Common myeloid progenitor, CD34-positive (primary cell): ENCODE measurements at regions of chr4 and their contacts with region 1.

Region 1: DNA sequence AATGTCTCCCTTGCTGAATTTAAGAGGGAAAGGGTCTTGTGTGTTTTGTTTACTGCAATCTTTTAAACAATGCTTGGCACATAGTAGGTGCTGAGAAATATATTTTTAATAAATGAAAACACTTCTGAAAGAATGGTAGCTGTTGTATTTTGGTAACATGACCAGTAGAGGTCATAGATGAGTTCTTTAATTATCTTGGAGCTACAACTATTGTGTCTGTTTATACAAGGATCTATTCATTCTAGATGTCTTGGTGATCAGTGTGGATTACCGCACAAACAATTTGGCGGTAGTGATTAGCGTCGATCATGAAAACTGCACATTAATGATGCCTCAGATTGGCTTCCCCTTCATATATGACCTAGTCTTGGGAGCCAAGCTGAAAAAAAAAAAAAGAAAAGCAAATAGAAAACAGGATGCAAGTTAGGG is 21.4 kb upstream of the SCRG1 start:
- DNase-seq: peak in 2 of 3 donors; percentile 42 to 51
- H3K4me3 ChIP-seq: no peak overlapping the region
- H3K27ac ChIP-seq: no peak overlapping the region
- H3K4me1 ChIP-seq: peaks cover 0 to 40% (median 6%) of the 10 kb centered on the region in 4 experiments
- H3K27me3 ChIP-seq: no peaks in the 10 kb centered on the region

Region 2: DNA sequence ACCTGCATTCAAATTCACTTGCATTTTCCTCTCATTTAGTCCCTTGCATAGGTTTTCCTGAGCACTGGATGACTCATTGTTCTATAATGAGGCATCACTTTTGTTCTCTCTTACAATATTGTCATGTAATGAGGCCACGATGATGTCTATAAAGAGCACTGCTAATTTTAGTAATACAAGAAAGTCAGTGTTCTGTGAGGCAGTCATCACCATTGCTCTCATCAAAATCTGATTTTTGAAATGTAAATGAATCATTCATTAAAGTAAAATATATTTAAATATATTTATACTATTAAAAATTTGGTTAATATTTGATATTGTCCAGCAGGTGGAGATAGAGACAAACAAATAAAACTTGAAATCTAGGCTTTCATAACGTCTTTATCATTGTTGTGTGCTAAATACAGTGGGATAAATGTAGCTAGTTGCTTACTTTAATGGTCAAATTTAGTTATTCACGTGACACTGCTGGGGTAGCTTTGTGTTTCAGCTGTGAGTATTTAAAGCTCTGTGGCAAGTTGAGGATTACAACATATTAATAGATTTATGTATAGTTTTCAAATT is 101.6 kb before region 1 on chr4:
- CTCF ChIA-PET with region 1: interaction called, 177 read pairs
- POLR2A ChIA-PET with region 1: no interaction called
- DNase-seq: peak; percentile 47 to 71 (median 69)
- H3K4me3 ChIP-seq: no peak overlapping the region
- H3K27ac ChIP-seq: no peak overlapping the region
- H3K4me1 ChIP-seq: no peaks in the 10 kb centered on the region
- H3K27me3 ChIP-seq: no peaks in the 10 kb centered on the region

Region 3: DNA sequence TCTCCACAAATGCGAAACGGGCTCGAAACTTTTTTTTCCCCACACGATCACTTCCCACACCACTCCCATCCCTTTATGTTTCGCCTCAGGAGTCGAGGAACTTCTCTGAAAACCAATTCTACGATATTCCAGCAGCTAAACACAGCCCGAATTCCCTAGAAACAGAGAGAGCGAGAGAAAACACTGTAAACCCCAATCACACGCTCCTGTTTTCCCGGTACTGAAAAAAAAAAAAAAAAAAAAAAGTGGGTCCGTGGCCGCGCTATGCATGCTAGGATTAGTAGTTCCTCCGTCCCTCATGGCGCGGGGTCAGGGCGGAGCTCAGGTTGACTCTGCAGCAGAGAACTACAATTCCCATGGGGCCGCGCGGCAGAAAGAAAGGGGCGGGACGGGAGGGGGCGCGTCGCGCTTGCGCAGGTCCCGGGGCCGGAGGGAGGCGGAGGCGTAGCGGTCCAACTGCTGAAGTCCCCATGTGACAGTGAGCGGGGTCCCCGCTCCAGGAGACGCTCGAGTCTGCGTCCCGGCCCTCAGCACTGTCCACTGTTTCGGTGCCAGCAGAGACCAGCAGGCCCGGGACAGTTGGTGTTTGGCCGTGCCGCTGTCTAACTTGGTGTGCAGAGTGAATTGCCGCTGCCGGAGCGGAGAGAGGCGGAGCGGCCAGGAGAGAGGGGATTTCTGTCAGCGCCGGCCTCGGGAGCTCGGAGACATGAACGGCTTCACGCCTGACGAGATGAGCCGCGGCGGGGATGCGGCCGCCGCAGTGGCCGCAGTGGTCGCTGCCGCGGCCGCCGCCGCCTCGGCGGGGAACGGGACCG is 49.7 kb before region 1 on chr4 and contains the start of gene SAP30:
- CTCF ChIA-PET with region 1: interaction called, 31 read pairs
- POLR2A ChIA-PET with region 1: no interaction called
- DNase-seq: peak; percentile 99
- H3K4me3 ChIP-seq: peak within 1 kb of the TSS; percentile 66 to 99 (median 92)
- H3K27ac ChIP-seq: peak within 1 kb of the TSS; percentile 79 to 88
- H3K4me1 ChIP-seq: peaks cover 4 to 36% (median 26%) of the 10 kb centered on the region in 4 experiments
- H3K27me3 ChIP-seq: no peaks in the 10 kb centered on the region

Region 4: DNA sequence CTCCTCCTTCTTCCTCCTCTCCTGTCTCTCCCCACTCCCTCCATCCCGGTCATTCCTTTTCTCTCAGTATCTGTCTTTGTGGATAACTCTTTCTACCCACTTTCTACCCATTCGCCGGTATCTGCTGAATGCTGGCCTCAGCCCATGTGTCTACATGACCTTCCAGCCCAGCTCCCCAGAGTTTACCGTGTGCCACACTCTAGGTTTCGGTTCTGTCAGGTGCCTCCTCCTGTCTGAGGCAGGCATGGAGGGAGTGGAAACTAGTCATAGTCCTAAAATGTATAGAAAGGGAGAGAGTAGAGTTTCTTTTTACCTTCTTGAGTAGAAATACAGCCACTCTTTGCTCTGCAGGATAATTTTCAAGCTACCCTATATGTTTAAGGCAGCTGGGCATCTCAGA is 12.1 kb after region 1 on chr4:
- CTCF ChIA-PET with region 1: interaction called, 16 read pairs
- POLR2A ChIA-PET with region 1: no interaction called
- DNase-seq: no peak
- H3K4me3 ChIP-seq: no peak overlapping the region
- H3K27ac ChIP-seq: no peak overlapping the region
- H3K4me1 ChIP-seq: peaks cover 0 to 21% (median 8%) of the 10 kb centered on the region in 4 experiments
- H3K27me3 ChIP-seq: no peaks in the 10 kb centered on the region

Region 5: GRCh38 chr4:173494013-173494970 is 74.0 kb after region 1 on chr4:
- CTCF ChIA-PET with region 1: interaction called, 21 read pairs
- POLR2A ChIA-PET with region 1: interaction called, 4 read pairs
- DNase-seq: peak; percentile 74 to 82 (median 78)
- H3K4me3 ChIP-seq: peak overlapping the region; percentile 13 to 81 (median 58)
- H3K27ac ChIP-seq: no peak overlapping the region
- H3K4me1 ChIP-seq: peaks cover 7 to 36% (median 26%) of the 10 kb centered on the region in 4 experiments
- H3K27me3 ChIP-seq: peaks cover 8 to 60% (median 12%) of the 10 kb centered on the region in 5 experiments

Region 6: DNA sequence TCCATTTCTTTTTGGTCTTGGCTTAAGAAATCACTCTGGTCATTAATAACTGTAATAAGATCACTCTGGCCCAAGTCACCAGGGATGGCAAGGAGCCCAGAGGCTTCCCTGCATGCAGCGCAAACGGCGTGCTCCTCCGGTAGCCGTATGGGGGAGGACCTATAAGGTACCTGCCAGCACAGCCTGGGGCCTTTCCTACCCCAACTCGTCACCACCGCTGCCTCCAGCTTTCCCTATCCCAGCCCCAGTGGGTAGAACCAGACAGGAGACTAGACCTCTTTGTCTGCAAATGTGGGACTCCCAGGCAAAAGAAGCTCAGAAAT is 83.8 kb after region 1 on chr4:
- CTCF ChIA-PET with region 1: interaction called, 13 read pairs
- POLR2A ChIA-PET with region 1: no interaction called
- DNase-seq: no peak
- H3K4me3 ChIP-seq: no peak overlapping the region
- H3K27ac ChIP-seq: no peak overlapping the region
- H3K4me1 ChIP-seq: peaks cover 0 to 59% (median 44%) of the 10 kb centered on the region in 4 experiments
- H3K27me3 ChIP-seq: peaks cover 20 to 100% (median 78%) of the 10 kb centered on the region in 5 experiments

Region 7: DNA sequence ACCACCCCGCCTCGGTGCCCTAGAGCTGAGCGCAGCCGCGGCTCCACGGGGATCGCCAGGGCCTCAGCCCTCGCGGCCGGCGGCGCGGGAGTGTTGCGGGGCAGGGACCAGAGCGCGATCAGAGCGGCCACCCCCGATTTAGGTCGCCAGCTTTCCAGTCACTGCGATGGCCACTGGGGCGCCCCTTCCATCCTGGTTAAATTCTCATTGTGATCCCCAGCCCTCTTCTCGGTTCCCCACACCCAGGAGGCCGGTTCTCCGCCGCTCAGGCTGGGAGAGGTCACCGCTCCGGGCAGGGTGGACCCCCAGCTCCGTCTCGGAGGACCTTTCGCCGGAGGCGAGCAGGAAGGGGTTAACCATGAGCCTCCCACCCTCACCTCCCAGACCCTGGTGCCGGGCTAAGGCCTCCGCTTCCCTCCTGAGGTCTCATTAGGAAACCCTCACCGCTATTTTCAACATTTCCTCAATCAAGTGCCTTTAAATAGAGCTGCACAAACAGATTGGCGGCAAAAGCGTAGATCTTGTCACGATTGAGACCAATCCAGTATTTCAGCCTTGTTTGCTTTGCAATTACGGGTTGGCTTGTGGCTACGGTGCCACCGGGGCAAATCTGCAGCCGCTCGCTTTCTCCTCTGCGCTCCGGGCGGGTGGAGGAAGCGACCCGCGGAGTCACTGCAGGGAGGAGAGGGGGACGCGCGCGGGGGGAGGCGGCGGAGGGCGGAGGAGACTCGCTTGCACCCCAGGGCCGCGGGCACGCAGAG is 118.0 kb after region 1 on chr4:
- CTCF ChIA-PET with region 1: no interaction called
- POLR2A ChIA-PET with region 1: no interaction called
- DNase-seq: peak in 2 of 3 donors; percentile 65 to 76
- H3K4me3 ChIP-seq: peak overlapping the region in 6 of 7 experiments; percentile 0 to 51 (median 39)
- H3K27ac ChIP-seq: no peak overlapping the region
- H3K4me1 ChIP-seq: peaks cover 0 to 17% (median 16%) of the 10 kb centered on the region in 4 experiments
- H3K27me3 ChIP-seq: peaks cover 53 to 95% (median 78%) of the 10 kb centered on the region in 5 experiments